CD4-positive, alpha-beta memory T cell (primary cell): ENCODE measurements at regions of chr2 and their contacts with region 1.

Region 1: GRCh38 chr2:233976690-233977294 is 59.6 kb downstream of the TRPM8 start:
- DNase-seq: peak; percentile 40 to 69 (median 66)
- H3K4me3 ChIP-seq: no peak overlapping the region
- H3K4me3 Mint-ChIP-seq: peak overlapping the region in 6 of 8 donors; percentile 1 to 66 (median 27)
- H3K27ac ChIP-seq: no peak overlapping the region
- H3K27ac Mint-ChIP-seq: peak overlapping the region in 6 of 7 donors; percentile 9 to 83 (median 48)
- H3K4me1 ChIP-seq: peaks cover 24% of the 10 kb centered on the region
- H3K4me1 Mint-ChIP-seq: peaks cover 25 to 38% (median 27%) of the 10 kb centered on the region in 4 donors
- H3K27me3 ChIP-seq: no peaks in the 10 kb centered on the region
- H3K27me3 Mint-ChIP-seq: no peaks in the 10 kb centered on the region

Region 2: DNA sequence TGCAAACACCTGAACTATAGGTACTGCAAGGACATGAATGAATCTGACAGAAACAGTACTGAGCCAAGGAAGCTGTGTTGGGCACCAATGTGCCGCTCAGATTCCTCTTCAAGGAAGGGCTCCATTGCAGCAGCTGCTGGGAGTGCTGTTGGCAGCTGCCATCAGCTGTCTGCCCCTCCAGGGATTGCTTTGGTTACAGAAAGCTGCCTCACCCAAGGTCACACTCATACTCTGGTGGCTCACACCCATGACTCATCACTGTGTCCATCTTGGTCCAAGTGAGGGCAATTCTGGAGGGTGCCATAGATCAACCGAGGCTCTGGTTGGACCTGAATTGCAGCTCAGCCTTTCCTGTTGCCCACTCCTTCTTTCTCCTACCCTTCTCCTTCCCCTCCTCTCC is 84.0 kb before region 1 on chr2:
- CTCF ChIA-PET with region 1: no interaction called
- POLR2A ChIA-PET with region 1: no interaction called
- intact Hi-C with region 1: no loop called
- DNase-seq: no peak
- H3K4me3 ChIP-seq: no peak overlapping the region
- H3K4me3 Mint-ChIP-seq: no peak overlapping the region
- H3K27ac ChIP-seq: no peak overlapping the region
- H3K27ac Mint-ChIP-seq: no peak overlapping the region
- H3K4me1 ChIP-seq: no peaks in the 10 kb centered on the region
- H3K4me1 Mint-ChIP-seq: no peaks in the 10 kb centered on the region
- H3K27me3 ChIP-seq: no peaks in the 10 kb centered on the region
- H3K27me3 Mint-ChIP-seq: peaks cover 13 to 15% of the 10 kb centered on the region in 2 donors

Region 3: GRCh38 chr2:233928594-233929351 is 48.0 kb before region 1 on chr2:
- CTCF ChIA-PET with region 1: no interaction called
- POLR2A ChIA-PET with region 1: no interaction called
- intact Hi-C with region 1: no loop called
- DNase-seq: no peak
- H3K4me3 ChIP-seq: no peak overlapping the region
- H3K4me3 Mint-ChIP-seq: no peak overlapping the region
- H3K27ac ChIP-seq: no peak overlapping the region
- H3K27ac Mint-ChIP-seq: no peak overlapping the region
- H3K4me1 ChIP-seq: no peaks in the 10 kb centered on the region
- H3K4me1 Mint-ChIP-seq: peaks cover 0 to 2% (median under 1%) of the 10 kb centered on the region in 4 donors
- H3K27me3 ChIP-seq: no peaks in the 10 kb centered on the region
- H3K27me3 Mint-ChIP-seq: peaks cover 26 to 47% of the 10 kb centered on the region in 2 donors

Region 4: GRCh38 chr2:234102112-234102511 is 125.3 kb after region 1 on chr2:
- CTCF ChIA-PET with region 1: interaction called, 29 read pairs
- POLR2A ChIA-PET with region 1: interaction called, 3 read pairs
- intact Hi-C with region 1: loop called (anchors 1 kb)
- DNase-seq: peak in 4 of 5 donors; percentile 27 to 49 (median 48)
- H3K4me3 ChIP-seq: peak overlapping the region in 1 of 2 donors; percentile 18
- H3K4me3 Mint-ChIP-seq: peak overlapping the region in 6 of 8 donors; percentile 14 to 77 (median 52)
- H3K27ac ChIP-seq: no peak overlapping the region
- H3K27ac Mint-ChIP-seq: peak overlapping the region; percentile 1 to 80 (median 62)
- H3K4me1 ChIP-seq: peaks cover 37% of the 10 kb centered on the region
- H3K4me1 Mint-ChIP-seq: peaks cover 38 to 57% (median 44%) of the 10 kb centered on the region in 4 donors
- H3K27me3 ChIP-seq: no peaks in the 10 kb centered on the region
- H3K27me3 Mint-ChIP-seq: no peaks in the 10 kb centered on the region

Region 5: DNA sequence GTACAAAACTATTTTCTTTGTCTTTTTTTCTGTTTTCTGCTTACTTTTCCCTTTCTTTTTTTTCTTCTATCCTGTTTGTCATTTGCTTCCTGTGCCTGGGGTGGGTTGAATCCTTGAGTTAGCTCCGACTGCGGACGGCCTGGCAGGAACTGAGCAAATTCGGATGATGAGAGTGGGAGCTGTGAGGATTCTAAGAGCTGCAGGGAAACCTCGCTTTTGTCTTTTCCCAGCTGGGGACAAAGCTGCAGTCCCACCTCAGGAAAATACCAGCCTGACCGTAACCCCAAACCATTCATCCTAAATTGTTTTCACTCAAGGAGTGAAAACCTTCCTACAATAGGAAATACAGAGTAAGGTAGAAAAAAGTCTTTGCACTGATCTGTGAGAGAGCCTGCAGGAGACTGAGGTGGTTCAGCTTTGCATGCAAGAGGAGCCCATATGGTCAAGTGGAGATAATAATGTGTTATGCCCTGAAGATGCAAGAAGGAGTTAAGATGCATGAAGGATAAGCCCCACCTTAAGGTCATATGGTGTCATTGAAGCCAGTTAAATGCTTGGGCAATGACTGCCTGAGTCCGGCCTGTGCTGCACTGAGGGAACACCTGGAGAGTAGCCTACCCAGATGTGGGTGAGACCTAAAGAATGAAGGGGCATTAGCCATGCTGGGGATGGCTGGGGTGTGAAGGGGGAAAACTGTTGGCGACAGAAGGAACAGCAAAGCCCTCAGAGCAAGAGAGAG is 551.8 kb after region 1 on chr2:
- CTCF ChIA-PET with region 1: no interaction called
- POLR2A ChIA-PET with region 1: no interaction called
- intact Hi-C with region 1: no loop called
- DNase-seq: no peak
- H3K4me3 ChIP-seq: no peak overlapping the region
- H3K4me3 Mint-ChIP-seq: no peak overlapping the region
- H3K27ac ChIP-seq: no peak overlapping the region
- H3K27ac Mint-ChIP-seq: no peak overlapping the region
- H3K4me1 ChIP-seq: no peaks in the 10 kb centered on the region
- H3K4me1 Mint-ChIP-seq: no peaks in the 10 kb centered on the region
- H3K27me3 ChIP-seq: no peaks in the 10 kb centered on the region
- H3K27me3 Mint-ChIP-seq: peaks cover 14 to 19% of the 10 kb centered on the region in 2 donors